ENCODE measurements at regions of chr7 and their contacts with region 1.

Region 1: GRCh38 chr7:23273141-23273599 is 26.0 kb upstream of the MALSU1 start:
- DNase-seq: peak; percentile 84

Region 2: DNA sequence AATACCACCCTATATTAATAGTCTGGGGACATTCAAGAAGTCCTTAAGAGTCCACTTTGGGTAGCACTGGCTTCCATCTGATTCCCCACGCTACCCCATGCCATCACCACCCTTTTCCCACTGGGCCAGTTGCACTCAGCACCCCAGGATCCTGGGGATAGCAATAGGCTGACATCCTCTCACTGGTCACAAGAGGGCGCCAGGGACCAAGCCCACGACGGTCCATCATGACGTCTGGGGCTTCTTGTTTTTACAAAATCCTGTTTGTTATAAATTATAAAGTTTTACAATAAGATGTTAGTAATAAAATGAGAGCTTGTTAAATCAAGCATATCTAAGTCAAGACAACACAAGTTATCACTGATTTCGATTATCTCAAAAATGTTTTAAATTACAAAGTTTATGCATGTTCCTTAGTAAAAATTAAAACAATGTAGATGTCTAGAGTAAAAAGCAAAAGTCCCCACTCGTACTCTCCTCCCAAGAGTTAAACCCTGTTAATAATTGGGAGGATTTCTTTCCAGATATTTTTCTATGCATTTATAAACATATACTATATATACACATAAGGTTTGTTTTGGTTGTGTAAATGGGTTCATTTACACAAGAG is 11.2 kb before region 1 on chr7:
- CTCF ChIA-PET with region 1: interaction called, 19 read pairs
- POLR2A ChIA-PET with region 1: interaction called, 4 read pairs
- DNase-seq: peak; percentile 84

Region 3: DNA sequence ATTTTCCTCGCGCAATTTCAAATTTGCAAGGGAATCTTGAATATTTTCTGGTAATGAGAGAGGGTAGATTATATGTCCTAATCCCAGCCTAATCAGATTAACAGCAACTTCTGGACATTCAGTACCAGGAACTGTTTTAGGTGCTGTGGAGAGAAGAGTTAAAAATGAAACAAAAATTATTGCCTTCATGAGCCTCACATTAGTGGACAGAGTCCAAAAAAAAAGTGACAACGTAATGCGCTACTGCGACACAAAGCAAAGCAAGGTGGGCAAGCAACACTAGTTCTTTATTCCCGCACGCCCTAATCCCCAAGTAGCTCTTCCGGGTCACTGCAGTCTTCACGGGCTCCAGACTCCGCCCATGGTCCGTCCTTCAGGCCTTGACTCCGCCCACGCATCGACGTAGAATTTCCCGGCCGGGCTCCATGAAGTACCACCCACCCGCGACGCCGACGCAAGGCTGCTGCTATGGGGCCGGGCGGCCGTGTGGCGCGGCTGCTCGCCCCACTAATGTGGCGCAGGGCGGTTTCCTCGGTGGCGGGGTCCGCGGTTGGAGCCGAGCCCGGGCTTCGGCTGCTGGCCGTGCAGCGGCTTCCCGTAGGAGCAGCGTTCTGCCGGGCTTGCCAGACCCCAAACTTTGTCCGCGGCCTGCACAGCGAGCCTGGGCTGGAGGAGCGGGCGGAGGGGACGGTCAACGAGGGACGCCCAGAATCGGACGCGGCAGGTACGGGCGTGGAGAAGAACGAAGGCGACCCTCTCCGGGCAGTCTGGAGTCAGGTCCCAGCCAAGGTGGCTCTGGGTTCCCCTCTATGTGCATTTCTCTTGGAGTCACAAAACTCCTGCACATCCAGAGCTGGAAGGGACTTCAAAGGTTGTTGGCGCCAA is 26.0 kb after region 1 on chr7 and contains the start of gene MALSU1:
- CTCF ChIA-PET with region 1: interaction called, 5 read pairs
- POLR2A ChIA-PET with region 1: interaction called, 11 read pairs
- DNase-seq: peak; percentile 95